ENCODE measurements at regions of chr9 and their contacts with region 1.

Region 1: GRCh38 chr9:124868511-124869465 is 6.9 kb downstream of the ARPC5L start:
- DNase-seq: peak; percentile 92
- H3K4me3 ChIP-seq: peak overlapping the region; percentile 82 to 98 (median 90)
- H3K27ac ChIP-seq: peak overlapping the region; percentile 93 to 98 (median 94)
- H3K4me1 ChIP-seq: peaks cover 0 to 54% (median 50%) of the 10 kb centered on the region in 4 donors
- H3K27me3 ChIP-seq: no peaks in the 10 kb centered on the region
- CTCF ChIP-seq: no peak
- EP300 ChIP-seq: no peak
- POLR2A ChIP-seq: peak; percentile 81 to 88

Region 2: DNA sequence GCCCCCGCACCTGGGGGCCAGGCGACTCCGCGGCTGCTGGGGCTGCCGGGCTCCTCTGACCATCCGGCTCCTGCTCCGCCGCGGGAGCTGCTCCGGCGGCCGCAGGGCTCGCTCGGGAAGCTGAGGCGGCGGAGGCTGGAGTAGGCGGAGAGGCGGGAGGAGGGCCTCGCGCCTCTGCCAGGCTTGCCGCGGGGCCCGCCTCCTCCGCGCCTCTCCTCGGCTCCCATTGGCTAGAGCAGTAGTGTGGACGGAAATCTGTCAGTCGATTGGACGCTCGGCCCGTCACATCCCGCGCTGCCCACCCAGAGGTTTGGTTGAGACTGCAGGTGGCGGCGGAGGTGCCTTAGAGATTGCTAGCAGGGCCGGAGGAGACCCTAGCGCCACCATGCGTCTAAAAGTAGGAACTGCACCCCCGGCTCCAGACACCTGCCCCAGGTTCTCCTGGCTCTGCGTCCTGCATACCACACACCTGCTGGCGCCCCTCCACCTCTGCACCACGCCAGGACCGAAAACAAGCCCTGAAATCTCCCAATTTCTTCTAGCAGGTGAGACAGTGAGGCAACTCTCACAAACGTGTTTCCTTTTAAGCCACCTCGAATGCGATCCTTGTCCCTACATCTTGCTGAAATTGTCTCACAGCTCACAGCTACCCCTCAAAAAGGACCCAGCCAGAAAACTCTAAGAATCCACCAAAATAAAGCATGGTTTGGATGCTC is 274.7 kb after region 1 on chr9 and contains the start of gene SCAI:
- intact Hi-C with region 1: loop called (anchors 5 kb)
- DNase-seq: peak; percentile 100
- H3K4me3 ChIP-seq: peak within 1 kb of the TSS; percentile 73 to 96 (median 86)
- H3K27ac ChIP-seq: peak within 1 kb of the TSS; percentile 83 to 87 (median 84)
- H3K4me1 ChIP-seq: peaks cover 0 to 51% (median 30%) of the 10 kb centered on the region in 4 donors
- H3K27me3 ChIP-seq: no peaks in the 10 kb centered on the region
- CTCF ChIP-seq: peak; percentile 98 to 99 (median 99)
- EP300 ChIP-seq: no peak
- POLR2A ChIP-seq: no peak
- total RNA-seq, gene SCAI: 5.4 to 15.8 (median 11.4) TPM

Region 3: GRCh38 chr9:125189361-125190289 is 320.8 kb after region 1 on chr9 and contains the start of gene PPP6C:
- intact Hi-C with region 1: loop called (anchors 5 kb)
- DNase-seq: peak; percentile 98
- H3K4me3 ChIP-seq: peak within 1 kb of the TSS; percentile 78 to 100 (median 89)
- H3K27ac ChIP-seq: peak within 1 kb of the TSS; percentile 91 to 97 (median 94)
- H3K4me1 ChIP-seq: peaks cover 0 to 40% (median 34%) of the 10 kb centered on the region in 4 donors
- H3K27me3 ChIP-seq: no peaks in the 10 kb centered on the region
- CTCF ChIP-seq: peak; percentile 31 to 57 (median 44)
- EP300 ChIP-seq: peak in 1 of 4 donors; percentile 30
- POLR2A ChIP-seq: peak; percentile 79 to 89
- total RNA-seq, gene PPP6C: 24.9 to 34.6 (median 31.5) TPM